ENCODE measurements at regions of chr13 and their contacts with region 1.

Region 1: DNA sequence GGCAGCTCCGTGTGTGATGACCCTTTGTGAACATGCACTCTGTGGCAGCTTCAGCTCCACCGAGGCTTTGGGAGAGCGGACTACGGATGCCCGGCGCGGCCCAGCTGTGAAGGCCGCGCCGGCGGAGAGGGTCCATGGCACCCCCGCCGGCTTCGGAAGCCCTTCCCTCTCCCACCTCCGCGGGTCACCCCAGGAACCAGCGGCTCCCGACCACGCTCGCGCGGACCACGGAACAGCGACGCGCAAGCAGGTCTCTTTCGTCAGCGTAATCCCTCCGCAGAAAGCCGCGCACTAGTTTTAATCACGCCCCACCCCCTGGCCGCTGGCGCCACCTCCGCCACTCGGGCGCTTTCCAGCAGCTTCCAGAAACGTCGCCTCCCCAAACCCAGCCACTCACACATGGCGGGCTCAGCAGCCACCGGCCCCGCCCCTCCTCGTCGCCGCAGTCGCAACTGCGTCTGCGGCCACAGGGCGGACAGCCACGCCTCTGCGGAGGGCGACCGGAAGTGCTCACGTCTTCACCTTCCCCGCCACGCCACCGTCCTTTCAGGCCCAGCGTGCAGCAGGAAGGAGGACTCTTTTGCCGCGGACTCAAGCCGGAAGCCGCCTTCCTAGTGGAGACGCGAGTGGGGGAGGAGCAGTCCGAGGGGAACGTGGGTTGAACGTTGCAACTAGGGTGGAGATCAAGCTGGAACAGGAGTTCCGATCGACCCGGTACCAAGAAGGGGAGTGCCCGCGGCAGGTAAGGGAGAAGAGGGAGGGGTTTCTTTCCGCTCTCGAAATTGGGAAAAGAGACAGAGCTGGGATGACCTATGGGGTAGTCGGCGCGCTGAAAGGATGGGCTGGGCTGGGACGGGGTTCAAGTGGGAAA is at the start of gene USPL1:
- DNase-seq: peak; percentile 99
- ATAC-seq: peak; percentile 94
- H3K4me3 ChIP-seq: peak within 1 kb of the TSS; percentile 72
- H3K27ac ChIP-seq: peak within 1 kb of the TSS; percentile 92
- H3K4me1 ChIP-seq: no peaks in the 10 kb centered on the region; the same call in 1 of the 2 replicates
- H3K27me3 ChIP-seq: no peaks in the 10 kb centered on the region
- CTCF ChIP-seq: peak; percentile 22; the same call in 1 of the 2 replicates
- POLR2A ChIP-seq: peak; percentile 92
- RAD21 ChIP-seq: peak; percentile 31; the same call in 1 of the 2 replicates
- total RNA-seq, gene USPL1: 15.4 and 22.5 TPM in 2 replicates

Region 2: DNA sequence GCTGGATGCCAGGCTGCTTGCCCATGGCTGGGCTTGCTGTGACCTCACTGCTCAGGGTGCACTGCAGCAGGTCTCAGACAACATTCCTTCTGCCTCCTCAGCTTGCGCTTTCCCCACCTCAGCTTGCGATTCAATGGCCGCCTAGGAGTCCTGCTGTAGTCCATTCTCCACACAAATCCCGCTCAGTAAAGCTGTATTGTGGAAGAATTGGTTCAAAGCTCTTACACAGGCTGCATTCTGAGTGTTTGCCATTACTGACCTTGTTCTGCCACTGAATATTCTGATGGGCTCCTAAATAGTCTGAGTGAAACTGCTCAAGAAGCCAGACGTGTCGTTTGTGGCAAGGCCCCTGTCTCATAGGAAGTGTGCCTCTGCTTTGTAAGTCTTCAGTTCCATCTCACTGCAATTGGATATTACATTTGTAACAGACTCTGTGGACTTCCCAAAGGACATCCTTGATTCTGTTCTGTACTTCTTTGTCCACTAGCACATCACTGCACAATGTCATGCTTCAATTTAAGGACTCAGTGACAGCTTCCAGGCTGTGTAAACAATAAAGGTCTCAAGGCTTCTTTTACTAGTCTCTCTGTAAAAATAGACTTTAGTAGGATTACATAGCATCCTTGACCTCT is 360.0 kb before region 1 on chr13:
- CTCF ChIA-PET with region 1: no interaction called
- POLR2A ChIA-PET with region 1: no interaction called
- dilution Hi-C with region 1: no loop called
- in situ Hi-C with region 1: no loop called
- intact Hi-C with region 1: loop called (anchors 10 kb)
- DNase-seq: peak; percentile 9
- ATAC-seq: peak; percentile 56
- H3K4me3 ChIP-seq: no peak overlapping the region
- H3K27ac ChIP-seq: no peak overlapping the region
- H3K4me1 ChIP-seq: peaks cover 8% of the 10 kb centered on the region
- H3K27me3 ChIP-seq: no peaks in the 10 kb centered on the region
- CTCF ChIP-seq: no peak
- POLR2A ChIP-seq: no peak
- RAD21 ChIP-seq: no peak

Region 3: GRCh38 chr13:30422054-30422839 is 195.3 kb before region 1 on chr13 and contains the start of gene UBE2L5:
- CTCF ChIA-PET with region 1: no interaction called
- POLR2A ChIA-PET with region 1: no interaction called
- dilution Hi-C with region 1: no loop called
- in situ Hi-C with region 1: no loop called
- intact Hi-C with region 1: loop called (anchors 1 kb)
- DNase-seq: peak; percentile 74
- ATAC-seq: peak; percentile 90
- H3K4me3 ChIP-seq: peak within 1 kb of the TSS; percentile 99
- H3K27ac ChIP-seq: peak within 1 kb of the TSS; percentile 94
- H3K4me1 ChIP-seq: peaks cover 4% of the 10 kb centered on the region; the same call in 1 of the 2 replicates
- H3K27me3 ChIP-seq: no peaks in the 10 kb centered on the region
- CTCF ChIP-seq: no peak
- POLR2A ChIP-seq: no peak
- RAD21 ChIP-seq: no peak
- total RNA-seq, gene UBE2L5: 0.18 TPM in 1 of 2 replicates, not detected in the other

Region 4: DNA sequence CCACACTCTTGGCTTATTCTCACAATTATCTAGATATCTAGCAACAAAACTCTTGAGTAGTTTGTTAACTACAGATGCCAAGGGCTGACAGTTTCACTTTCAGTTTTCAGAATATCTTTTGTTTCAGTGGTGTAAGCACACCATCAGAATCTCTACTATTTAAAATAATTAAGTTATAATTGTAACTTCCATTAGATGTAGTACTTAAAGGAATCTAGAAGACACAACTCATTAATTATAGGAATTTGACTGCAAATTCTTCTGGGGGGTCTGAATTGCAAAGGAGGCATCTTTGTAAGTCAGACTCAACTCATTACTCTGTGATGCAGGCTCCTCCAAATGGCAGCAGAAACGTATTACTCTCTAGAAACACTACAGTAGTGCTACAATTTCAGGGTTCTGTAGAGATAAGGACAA is 44.7 kb before region 1 on chr13:
- CTCF ChIA-PET with region 1: no interaction called
- POLR2A ChIA-PET with region 1: no interaction called
- dilution Hi-C with region 1: no loop called
- in situ Hi-C with region 1: no loop called
- intact Hi-C with region 1: loop called (anchors 2 kb)
- DNase-seq: peak; percentile 57
- ATAC-seq: peak; percentile 58
- H3K4me3 ChIP-seq: peak overlapping the region; percentile 48; the same call in 1 of the 2 replicates
- H3K27ac ChIP-seq: peak overlapping the region; percentile 51; the same call in 1 of the 2 replicates
- H3K4me1 ChIP-seq: peaks cover 10% of the 10 kb centered on the region
- H3K27me3 ChIP-seq: no peaks in the 10 kb centered on the region
- CTCF ChIP-seq: peak; percentile 49
- POLR2A ChIP-seq: no peak
- RAD21 ChIP-seq: peak; percentile 52

Region 5: DNA sequence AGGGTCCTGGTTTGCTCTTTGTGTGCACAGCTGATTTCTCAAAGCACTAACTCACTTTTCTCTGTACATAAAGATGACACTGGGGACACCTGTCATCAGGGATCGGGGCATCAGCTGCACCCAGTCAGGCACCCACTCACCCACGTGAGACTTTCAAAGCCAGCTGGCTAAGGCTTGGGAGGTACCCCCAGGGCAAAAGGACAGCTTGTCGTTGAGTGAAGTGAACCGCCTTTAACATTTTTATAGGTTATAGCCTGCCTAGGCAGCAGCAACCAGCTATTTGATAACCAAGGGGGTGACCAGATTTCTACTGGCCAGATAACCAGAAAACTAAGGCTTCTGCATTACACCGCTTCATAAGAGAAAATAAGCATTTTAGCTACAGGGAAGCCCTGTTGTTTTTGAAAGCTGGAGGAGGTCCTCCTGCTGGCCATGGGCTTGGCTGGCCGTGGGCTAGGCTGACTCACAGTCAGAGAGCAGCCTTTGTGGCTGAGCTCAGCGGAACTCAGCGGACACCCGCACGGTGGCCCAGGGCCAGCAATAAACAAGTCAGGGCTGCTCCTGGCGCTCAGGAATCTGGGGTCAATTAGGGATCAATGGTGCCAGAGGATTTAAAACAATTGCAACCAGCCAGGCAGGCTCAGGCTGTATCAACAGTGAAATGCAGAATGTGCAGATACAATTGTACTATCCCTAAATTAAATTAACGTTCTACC is 174.9 kb after region 1 on chr13:
- CTCF ChIA-PET with region 1: interaction called, 3 read pairs
- POLR2A ChIA-PET with region 1: no interaction called
- dilution Hi-C with region 1: no loop called
- in situ Hi-C with region 1: no loop called
- intact Hi-C with region 1: loop called (anchors 2 kb)
- DNase-seq: peak; percentile 94
- ATAC-seq: peak; percentile 95
- H3K4me3 ChIP-seq: no peak overlapping the region
- H3K27ac ChIP-seq: peak overlapping the region; percentile 79
- H3K4me1 ChIP-seq: peaks cover 31% of the 10 kb centered on the region
- H3K27me3 ChIP-seq: no peaks in the 10 kb centered on the region
- CTCF ChIP-seq: peak; percentile 64
- POLR2A ChIP-seq: no peak
- RAD21 ChIP-seq: peak; percentile 66

Region 6: DNA sequence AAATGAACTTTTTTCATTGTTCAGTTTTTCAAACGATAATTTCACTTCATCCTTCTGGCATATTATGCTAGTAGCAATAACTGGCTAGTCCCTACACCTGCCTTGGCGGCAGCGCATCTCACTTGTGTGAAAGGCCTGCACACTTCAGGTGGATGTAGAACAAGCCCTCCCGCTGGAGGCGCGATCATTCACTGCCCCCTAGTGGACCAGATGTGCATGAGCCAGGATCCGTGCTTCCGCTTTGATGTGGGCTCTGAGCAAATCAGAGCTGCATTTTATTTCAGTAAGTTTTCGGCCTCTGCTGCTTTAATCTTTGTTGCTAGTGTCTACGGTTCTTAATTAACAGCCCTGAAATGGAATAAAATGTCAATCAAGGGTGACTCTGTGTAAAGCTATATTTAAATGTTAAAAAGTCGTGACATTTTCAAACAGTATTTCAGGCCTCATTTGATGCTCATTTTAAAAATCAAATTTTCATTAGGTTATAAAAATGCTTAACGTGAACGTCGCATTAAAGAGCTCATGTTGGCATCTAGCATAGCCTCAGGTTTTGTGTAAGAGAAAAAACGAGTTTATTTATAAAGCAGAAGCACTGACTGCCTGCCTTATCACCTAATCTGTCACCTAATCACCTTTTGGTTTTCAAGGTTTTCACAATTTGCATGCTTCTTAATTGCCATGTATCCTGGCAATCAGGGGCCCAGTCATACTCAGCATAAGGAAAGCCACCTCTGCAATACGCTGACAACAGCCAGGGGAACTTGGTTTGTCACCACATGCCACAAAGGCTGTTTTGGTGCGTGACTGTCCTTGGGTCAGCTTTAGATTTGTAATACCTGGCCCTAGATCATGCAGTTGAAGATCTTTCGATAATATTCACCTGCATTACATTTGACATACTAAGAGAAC is 427.1 kb after region 1 on chr13:
- CTCF ChIA-PET with region 1: no interaction called
- POLR2A ChIA-PET with region 1: no interaction called
- dilution Hi-C with region 1: no loop called
- in situ Hi-C with region 1: no loop called
- intact Hi-C with region 1: loop called (anchors 1 kb)
- DNase-seq: peak; percentile 81
- ATAC-seq: peak; percentile 72
- H3K4me3 ChIP-seq: no peak overlapping the region
- H3K27ac ChIP-seq: peak overlapping the region; percentile 80
- H3K4me1 ChIP-seq: peaks cover 20% of the 10 kb centered on the region
- H3K27me3 ChIP-seq: no peaks in the 10 kb centered on the region
- CTCF ChIP-seq: peak; percentile 97
- POLR2A ChIP-seq: peak; percentile 12; the same call in 1 of the 2 replicates
- RAD21 ChIP-seq: peak; percentile 99